Thyroid gland (tissue), 4 donors: ENCODE measurements at regions of chr3 and their contacts with region 1.

Region 1: GRCh38 chr3:42654331-42655201 is 1.1 kb downstream of the ZBTB47 start:
- DNase-seq: peak; percentile 71 to 74
- H3K4me3 ChIP-seq: peak overlapping the region in 2 of 3 donors; percentile 78 to 89
- H3K27ac ChIP-seq: peak overlapping the region; percentile 86 to 97 (median 92)
- H3K4me1 ChIP-seq: peaks cover 28 to 36% of the 10 kb centered on the region in 2 donors
- H3K27me3 ChIP-seq: no peaks in the 10 kb centered on the region
- CTCF ChIP-seq: no peak
- POLR2A ChIP-seq: peak; percentile 23 to 68

Region 2: GRCh38 chr3:42590989-42591756 is 63.4 kb before region 1 on chr3:
- intact Hi-C with region 1: loop called (anchors 2 kb)
- DNase-seq: peak in 1 of 2 donors; percentile 39
- H3K4me3 ChIP-seq: peak overlapping the region in 2 of 3 donors; percentile 59
- H3K27ac ChIP-seq: peak overlapping the region; percentile 68 to 73 (median 73)
- H3K4me1 ChIP-seq: peaks cover 12 to 16% of the 10 kb centered on the region in 2 donors
- H3K27me3 ChIP-seq: no peaks in the 10 kb centered on the region
- CTCF ChIP-seq: no peak
- POLR2A ChIP-seq: no peak